Dorsolateral prefrontal cortex (tissue), 120 donors: ENCODE measurements at regions of chr2 and their contacts with region 1.

Region 1: DNA sequence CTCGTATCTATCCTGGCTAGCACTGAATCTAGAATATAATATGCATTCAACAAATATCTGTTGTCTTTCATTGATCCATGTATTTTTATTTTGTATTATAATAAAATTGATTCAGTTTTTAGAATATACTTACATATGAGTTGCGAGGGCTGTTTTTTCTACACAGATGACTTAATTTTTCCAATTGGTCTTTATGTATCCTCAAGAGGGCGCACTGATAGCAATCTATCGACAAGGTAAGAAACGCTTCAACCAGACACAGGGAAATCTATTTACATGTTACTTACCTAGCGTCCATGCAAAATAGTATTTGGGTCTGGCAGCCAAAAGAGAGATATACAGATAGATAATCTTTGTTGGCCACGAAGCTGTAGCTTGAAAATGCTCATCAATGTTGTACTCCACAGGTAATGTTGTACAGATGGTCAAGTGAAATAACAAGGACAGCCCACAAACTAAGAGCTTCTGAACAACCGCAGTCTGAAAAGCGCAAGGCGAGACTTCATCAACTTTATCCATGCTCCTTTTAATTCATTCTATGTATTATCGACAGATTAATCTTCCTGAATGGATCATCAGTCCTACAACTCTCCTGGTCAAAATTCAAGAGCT is 35.5 kb upstream of the KIDINS220 start:
- DNase-seq: no peak
- H3K4me3 ChIP-seq: no peak overlapping the region
- H3K27ac ChIP-seq: no peak overlapping the region
- H3K27me3 ChIP-seq: no peaks in the 10 kb centered on the region
- CTCF ChIP-seq: peak; percentile 37 to 83 (median 67)

Region 2: DNA sequence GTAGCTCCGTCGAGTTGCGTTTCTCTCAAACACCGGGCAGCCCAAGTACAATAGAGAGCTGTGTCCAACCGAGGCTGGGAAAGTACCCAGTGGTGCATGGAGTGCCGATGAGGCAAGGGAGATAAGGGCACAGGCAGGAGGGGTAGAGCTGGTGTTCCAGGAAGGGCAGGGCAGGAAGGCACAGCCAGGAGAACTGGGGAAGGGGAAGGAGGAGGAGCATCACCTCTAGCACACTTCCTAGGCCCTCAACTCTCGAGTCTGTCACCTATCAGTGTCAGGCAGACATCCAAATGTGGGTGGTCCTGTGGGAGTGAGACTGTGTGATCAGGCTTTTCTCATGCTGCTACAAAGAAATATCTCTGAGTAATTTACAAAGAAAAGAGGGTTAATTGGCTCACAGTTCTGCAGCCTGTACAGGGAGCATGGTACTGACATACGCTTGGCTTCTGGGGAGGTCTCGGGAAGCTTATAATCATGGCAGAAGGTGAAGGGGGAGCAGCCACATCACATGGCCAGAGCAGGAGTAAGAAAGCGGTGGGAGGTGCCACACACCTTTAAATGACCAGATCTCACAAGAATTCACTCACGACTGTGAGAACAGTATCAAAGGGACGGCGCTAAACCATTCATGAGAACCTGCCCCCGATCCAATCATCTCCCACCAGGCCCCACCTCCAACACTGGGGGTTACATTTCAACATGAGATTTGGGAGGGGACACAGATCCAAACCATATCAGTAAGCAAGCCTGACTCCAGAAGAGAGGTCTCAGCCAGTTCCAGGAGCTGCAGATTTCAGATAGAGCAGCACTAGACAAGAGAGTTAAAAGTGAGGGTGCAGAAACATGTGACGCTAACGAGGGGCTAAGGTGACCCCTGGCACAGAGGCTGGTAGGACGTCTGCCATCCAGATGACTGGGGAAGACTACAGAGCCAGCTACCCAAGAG is 54.9 kb after region 1 on chr2:
- intact Hi-C with region 1: loop called in 1 of 2 experiments (anchors 5 kb)
- DNase-seq: peak in 9 of 10 donors; percentile 26 to 81 (median 65)
- H3K4me3 ChIP-seq: peak overlapping the region in 5 of 59 donors; percentile 1 to 37 (median 21)
- H3K27ac ChIP-seq: peak overlapping the region in 56 of 59 donors; percentile 34 to 98 (median 86)
- H3K27me3 ChIP-seq: no peaks in the 10 kb centered on the region
- CTCF ChIP-seq: no peak

Region 3: DNA sequence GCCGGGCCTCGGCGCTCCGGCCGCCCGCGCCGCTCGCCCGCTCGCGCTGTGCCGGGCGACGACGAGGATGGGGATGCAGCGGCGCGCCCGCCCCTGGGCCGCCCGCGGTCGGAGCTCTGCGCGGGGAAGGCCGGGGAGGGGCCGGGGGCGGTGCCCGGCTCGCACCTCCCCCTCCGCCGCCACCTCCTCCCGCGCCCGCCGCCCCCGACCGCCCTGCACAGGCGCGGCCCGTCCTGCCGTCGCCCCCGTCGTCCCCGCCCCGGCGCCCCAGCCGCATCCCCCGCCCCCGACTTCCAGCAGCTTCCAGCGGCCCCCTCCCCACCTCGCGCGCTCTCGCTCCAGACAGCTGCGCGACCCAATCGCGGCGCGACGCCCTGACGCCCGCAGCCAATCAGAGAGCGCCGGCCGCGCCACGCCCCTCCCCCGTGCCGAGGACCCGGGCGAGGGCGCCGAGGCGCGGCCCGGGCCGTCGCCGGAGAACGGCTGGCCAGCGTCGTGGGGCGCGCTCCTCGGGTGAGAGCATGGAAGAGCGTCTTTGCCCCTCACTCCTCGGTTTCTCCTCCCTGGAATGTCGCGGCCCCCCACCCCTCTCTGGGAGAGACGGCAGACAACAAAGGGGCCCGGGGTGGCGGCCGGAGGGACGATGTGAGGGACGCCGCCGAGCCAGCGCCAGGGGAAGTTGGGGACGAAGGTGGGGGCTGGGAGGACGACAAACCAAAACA is 130.8 kb after region 1 on chr2 and contains the start of gene MBOAT2:
- intact Hi-C with region 1: loop called in 1 of 2 experiments (anchors 10 kb)
- DNase-seq: peak; percentile 77 to 94 (median 84)
- H3K4me3 ChIP-seq: peak within 1 kb of the TSS; percentile 66 to 98 (median 89)
- H3K27ac ChIP-seq: peak within 1 kb of the TSS; percentile 71 to 99 (median 96)
- H3K27me3 ChIP-seq: no peaks in the 10 kb centered on the region
- CTCF ChIP-seq: peak in 3 of 56 donors; percentile 9 to 16 (median 10)
- total RNA-seq, gene MBOAT2: 52.5 to 138 (median 83.9) TPM

Region 4: GRCh38 chr2:9095690-9096351 is 222.9 kb after region 1 on chr2:
- intact Hi-C with region 1: loop called in 1 of 2 experiments (anchors 10 kb)
- DNase-seq: peak in 7 of 10 donors; percentile 22 to 73 (median 48)
- H3K4me3 ChIP-seq: peak overlapping the region in 55 of 59 donors; percentile 2 to 59 (median 31)
- H3K27ac ChIP-seq: peak overlapping the region in 11 of 59 donors; percentile 17 to 65 (median 49)
- H3K27me3 ChIP-seq: no peaks in the 10 kb centered on the region
- CTCF ChIP-seq: peak in 50 of 56 donors; percentile 21 to 68 (median 46)